ENCODE measurements at regions of chr2 and their contacts with region 1.

Region 1: DNA sequence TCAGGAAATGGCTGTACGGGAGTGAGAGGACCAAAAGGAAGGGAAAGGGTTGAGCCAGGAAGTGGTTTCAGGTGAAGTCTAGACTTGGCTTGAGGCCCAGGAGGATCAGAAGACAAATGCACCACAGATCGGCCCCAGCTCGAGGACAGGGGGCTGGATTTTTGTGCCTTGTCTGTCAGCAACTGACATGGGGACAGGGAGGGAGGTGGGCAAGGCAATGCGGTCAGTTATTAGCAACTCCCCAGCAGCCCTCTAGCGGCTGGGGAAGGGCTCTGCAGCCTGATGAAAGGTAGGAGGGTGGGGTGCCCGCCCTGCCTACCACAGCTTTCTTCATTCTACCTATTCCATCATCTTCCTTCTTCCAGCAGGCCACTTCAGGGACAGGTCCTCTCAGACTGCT is 50.0 kb downstream of the CPO start:
- DNase-seq: peak; percentile 29 to 61
- H3K4me3 ChIP-seq: no peak overlapping the region
- H3K27ac ChIP-seq: no peak overlapping the region
- H3K4me1 ChIP-seq: no peaks in the 10 kb centered on the region
- H3K27me3 ChIP-seq: no peaks in the 10 kb centered on the region
- CTCF ChIP-seq: peak; percentile 74 to 93 (median 90)
- EP300 ChIP-seq: no peak
- POLR2A ChIP-seq: no peak
- RAD21 ChIP-seq: peak; percentile 68 to 79

Region 2: DNA sequence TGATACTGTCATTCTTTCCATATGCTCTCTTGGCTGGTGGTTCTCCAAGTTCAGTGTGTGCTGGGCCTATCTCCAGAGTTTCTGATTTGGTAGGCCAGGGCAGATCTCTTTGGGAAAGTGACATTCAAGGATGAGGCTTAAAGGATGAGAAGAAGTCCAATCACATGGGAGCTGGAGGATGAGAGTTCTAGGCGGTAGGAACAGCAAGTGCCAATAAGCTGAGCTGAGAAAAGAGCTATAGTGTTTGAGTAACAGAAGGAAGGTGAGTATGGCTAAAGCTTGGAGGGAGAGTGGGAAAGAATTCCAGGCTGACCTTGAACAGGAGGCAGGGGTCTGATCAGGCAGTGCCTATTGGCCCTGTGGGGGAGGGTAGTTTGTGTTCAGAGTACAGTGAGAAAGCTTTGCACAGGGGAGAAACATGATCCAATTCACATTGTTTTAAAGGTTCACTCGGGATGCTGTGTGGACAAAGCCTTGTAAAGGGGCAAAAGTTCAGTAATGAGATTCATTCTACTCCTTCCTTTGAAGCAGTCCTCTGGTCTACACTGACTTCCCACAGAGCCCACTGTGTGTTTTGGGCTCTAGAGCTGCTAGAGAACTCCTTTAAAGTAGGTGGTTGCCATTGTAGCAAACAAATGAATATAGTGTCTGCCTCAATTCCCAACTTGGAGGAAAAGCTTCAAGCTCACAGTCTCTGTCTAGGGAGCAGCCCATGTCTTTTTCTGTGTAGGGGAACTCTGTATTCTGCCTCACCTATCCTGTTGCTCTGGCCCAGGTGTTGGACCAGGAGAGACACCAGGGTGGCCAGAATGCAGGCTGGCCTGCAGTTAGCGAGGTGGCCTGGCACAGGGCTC is 142.1 kb before region 1 on chr2:
- CTCF ChIA-PET with region 1: no interaction called
- POLR2A ChIA-PET with region 1: no interaction called
- DNase-seq: no peak
- H3K4me3 ChIP-seq: no peak overlapping the region
- H3K27ac ChIP-seq: no peak overlapping the region
- H3K4me1 ChIP-seq: no peaks in the 10 kb centered on the region
- H3K27me3 ChIP-seq: no peaks in the 10 kb centered on the region
- CTCF ChIP-seq: no peak
- EP300 ChIP-seq: no peak
- POLR2A ChIP-seq: no peak
- RAD21 ChIP-seq: no peak

Region 3: GRCh38 chr2:206971805-206972204 is 17.5 kb before region 1 on chr2:
- CTCF ChIA-PET with region 1: interaction called, 17 read pairs
- POLR2A ChIA-PET with region 1: no interaction called
- DNase-seq: no peak
- H3K4me3 ChIP-seq: no peak overlapping the region
- H3K27ac ChIP-seq: no peak overlapping the region
- H3K4me1 ChIP-seq: peaks cover 0 to 8% (median 1%) of the 10 kb centered on the region in 4 experiments; a peak in 4 of 7 replicates
- H3K27me3 ChIP-seq: no peaks in the 10 kb centered on the region
- CTCF ChIP-seq: no peak
- EP300 ChIP-seq: no peak
- POLR2A ChIP-seq: no peak
- RAD21 ChIP-seq: no peak

Region 4: GRCh38 chr2:207064128-207064690 is 74.9 kb after region 1 on chr2:
- CTCF ChIA-PET with region 1: interaction called, 18 read pairs
- POLR2A ChIA-PET with region 1: no interaction called
- DNase-seq: no peak
- H3K4me3 ChIP-seq: no peak overlapping the region
- H3K27ac ChIP-seq: no peak overlapping the region
- H3K4me1 ChIP-seq: 0 out of 7 replicates have a peak, but pooled peaks cover 0 to 4% (median 0%) of the 10 kb centered on the region in 4 experiments
- H3K27me3 ChIP-seq: no peaks in the 10 kb centered on the region; a peak in 1 of 7 replicates
- CTCF ChIP-seq: no peak
- EP300 ChIP-seq: no peak
- POLR2A ChIP-seq: no peak
- RAD21 ChIP-seq: no peak

Region 5: GRCh38 chr2:207265869-207266268 is 276.6 kb after region 1 on chr2:
- CTCF ChIA-PET with region 1: no interaction called
- POLR2A ChIA-PET with region 1: no interaction called
- DNase-seq: no peak
- H3K4me3 ChIP-seq: no peak overlapping the region
- H3K27ac ChIP-seq: no peak overlapping the region
- H3K4me1 ChIP-seq: no peaks in the 10 kb centered on the region
- H3K27me3 ChIP-seq: no peaks in the 10 kb centered on the region
- CTCF ChIP-seq: no peak
- EP300 ChIP-seq: no peak
- POLR2A ChIP-seq: no peak
- RAD21 ChIP-seq: no peak